Activated T-helper 2 cell treated with anti-CD3 and anti-CD28 coated beads, Interferon-gamma antibody, Interleukin-2, Interleukin-4, amounts not matched to agents 10 μg/mL and 5 μg/mL and 100 μg/mL, durations not matched to agents 14 hours and 24 hours and 36 hours (primary cell): ENCODE measurements at regions of chr3 and their contacts with region 1.

Region 1: DNA sequence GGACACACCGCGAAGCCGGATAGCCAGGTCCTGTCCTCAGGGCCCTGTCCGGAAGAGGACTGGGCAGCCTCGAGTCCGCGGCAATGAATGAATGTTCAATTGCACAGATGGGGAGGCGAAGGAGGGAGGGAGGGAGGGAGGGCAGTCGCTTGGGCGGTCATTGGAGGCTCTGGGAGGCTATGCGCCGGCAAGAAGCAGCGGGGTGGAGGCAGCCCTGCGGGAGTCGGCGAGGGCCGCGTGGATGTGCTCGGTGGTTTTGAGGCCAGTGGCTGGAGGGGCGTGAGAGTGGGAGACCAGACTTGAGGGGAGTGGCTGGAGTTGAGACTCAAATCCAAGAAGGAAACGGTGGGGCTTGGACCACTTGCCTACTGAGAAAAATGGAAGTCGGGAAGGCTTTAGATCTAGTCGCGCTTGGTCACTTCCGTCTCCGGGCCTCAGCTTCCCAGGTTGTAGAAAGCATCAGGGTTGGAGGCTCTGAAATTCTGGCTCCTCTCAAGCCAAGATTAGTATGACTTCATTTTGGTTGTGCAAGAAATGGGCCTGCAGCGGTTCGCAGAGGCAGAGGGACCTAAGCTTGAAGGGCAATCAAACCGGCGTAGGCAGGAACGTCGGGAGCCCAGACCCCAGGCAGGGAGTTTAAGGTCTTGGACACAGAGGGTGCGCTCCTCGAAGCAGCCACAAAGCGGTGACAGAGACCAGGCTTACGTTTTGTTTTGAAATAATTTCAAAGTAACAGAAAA is 21.1 kb upstream of the PLXND1 start:
- DNase-seq: peak; percentile 44
- H3K4me3 Mint-ChIP-seq: peak overlapping the region; percentile 86
- H3K27ac Mint-ChIP-seq: peak overlapping the region; percentile 79
- H3K4me1 Mint-ChIP-seq: peaks cover 18% of the 10 kb centered on the region
- H3K27me3 Mint-ChIP-seq: peaks cover 5% of the 10 kb centered on the region

Region 2: DNA sequence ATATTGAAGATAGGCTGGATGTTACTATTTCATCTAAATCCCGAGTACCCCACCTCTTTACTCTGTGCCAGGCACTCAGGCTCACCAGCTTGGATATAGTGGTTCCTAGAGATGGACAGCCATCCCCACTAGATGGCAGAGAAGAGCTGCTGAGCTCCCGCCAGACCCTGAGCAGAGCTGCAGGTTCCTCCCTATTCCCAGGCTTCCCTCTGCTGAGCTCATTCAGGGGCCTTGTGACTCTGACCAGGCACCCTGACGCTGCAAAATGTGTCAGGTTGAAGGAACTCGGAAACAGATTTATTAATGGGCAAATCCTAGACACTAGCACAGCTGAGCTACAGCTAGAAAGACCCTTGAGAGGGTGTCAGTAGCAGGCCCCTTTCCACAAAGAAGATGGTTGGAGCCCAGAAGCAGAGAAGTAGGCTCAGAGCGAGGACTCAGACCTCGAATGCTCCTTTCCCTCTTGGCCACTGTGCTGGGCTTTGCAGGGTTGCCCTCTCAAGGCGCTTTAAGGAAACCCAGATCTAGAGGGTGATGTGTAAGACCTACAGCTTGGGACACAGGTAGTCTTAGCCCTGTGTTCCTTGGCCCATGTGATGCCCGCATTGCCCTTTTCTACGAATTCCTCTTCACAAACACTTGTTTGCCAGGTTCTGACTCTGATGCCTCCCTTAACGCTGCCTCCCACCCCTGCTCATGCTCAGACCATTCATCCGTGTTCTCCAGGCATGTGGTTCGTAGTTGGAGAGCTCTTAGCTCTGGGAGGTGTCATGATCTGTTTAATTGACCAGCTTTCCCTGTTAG is 137.2 kb before region 1 on chr3:
- intact Hi-C with region 1: loop called (anchors 1 kb)
- DNase-seq: peak; percentile 20
- H3K4me3 Mint-ChIP-seq: no peak overlapping the region
- H3K27ac Mint-ChIP-seq: no peak overlapping the region
- H3K4me1 Mint-ChIP-seq: no peaks in the 10 kb centered on the region
- H3K27me3 Mint-ChIP-seq: no peaks in the 10 kb centered on the region

Region 3: GRCh38 chr3:129507181-129507831 is 120.3 kb before region 1 on chr3:
- intact Hi-C with region 1: no loop called
- DNase-seq: no peak
- H3K4me3 Mint-ChIP-seq: no peak overlapping the region
- H3K27ac Mint-ChIP-seq: no peak overlapping the region
- H3K4me1 Mint-ChIP-seq: no peaks in the 10 kb centered on the region
- H3K27me3 Mint-ChIP-seq: no peaks in the 10 kb centered on the region

Region 4: GRCh38 chr3:129756871-129757270 is 129.3 kb after region 1 on chr3:
- intact Hi-C with region 1: no loop called
- DNase-seq: no peak
- H3K4me3 Mint-ChIP-seq: no peak overlapping the region
- H3K27ac Mint-ChIP-seq: no peak overlapping the region
- H3K4me1 Mint-ChIP-seq: no peaks in the 10 kb centered on the region
- H3K27me3 Mint-ChIP-seq: no peaks in the 10 kb centered on the region

Region 5: DNA sequence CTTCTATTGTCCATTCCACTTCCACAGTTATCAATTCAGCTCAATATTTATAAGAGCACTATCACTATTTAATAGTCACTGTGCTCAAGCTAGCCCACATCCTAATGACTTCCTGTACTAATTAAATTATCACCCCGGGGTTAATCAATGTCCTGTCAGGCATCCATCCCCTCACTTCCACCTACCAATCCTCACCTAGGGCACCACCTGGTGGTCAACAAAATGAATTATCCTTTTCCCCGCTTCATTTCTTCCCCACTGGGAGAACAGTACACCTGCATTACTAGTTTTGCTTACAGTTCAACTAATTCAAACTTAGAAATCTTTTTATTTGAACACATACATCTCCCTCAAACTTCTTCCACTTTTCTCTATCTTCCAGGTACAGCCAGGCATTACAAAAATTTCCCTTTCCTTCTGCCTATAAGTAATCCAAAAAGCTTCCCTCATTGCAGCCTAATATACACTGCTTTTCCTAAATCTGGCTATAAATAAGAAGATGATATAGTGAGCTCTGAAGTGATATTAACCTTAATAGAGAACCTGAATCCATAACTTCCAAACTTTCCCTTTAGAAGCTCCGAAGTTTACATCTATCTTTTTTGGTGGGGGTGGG is 197.4 kb after region 1 on chr3:
- intact Hi-C with region 1: loop called (anchors 2 kb)
- DNase-seq: no peak
- H3K4me3 Mint-ChIP-seq: no peak overlapping the region
- H3K27ac Mint-ChIP-seq: no peak overlapping the region
- H3K4me1 Mint-ChIP-seq: peaks cover 17% of the 10 kb centered on the region
- H3K27me3 Mint-ChIP-seq: no peaks in the 10 kb centered on the region

Region 6: DNA sequence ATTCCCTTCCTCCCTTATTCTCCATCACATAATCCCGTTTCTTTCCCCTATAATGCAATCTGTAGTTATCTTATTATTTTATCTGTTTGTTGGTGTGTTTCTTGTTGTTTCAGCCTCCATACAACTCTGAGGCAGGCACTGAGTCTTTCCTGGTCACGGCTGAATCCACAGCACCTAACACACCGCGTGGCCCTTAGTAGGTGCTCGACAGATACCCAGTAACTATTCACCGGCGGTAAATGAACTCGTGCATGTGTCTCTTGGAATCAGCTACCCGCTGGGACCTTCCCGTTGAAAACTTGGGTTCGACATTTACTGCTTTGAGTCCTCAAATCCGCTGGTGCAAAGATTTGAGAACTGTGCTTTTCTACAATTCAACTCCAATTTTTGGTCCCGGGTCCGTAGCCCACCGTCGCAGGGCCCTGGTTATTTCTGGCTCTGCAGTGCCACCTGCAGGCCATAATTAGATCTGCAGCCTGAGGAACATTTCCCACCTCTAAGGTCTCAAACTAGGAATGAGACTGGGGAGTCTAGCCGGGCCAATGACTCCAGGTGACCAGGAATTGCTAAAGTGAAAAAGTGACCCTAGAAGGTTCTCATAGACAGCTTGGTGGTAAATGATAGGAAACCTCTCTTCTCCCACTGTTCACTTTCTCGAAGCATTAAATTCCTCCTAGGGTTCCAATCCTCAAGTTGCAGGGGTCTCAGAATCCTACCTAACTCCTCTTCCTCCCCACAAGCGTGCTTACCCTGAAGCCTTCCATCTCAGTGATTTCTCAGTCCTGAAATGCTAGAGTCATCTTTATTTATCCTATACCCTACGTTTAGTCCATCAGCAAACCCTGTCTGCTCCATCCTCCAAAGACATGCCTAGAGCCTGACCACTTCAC is 306.9 kb after region 1 on chr3:
- intact Hi-C with region 1: loop called (anchors 5 kb)
- DNase-seq: no peak
- H3K4me3 Mint-ChIP-seq: no peak overlapping the region
- H3K27ac Mint-ChIP-seq: no peak overlapping the region
- H3K4me1 Mint-ChIP-seq: peaks cover 7% of the 10 kb centered on the region
- H3K27me3 Mint-ChIP-seq: peaks cover 3% of the 10 kb centered on the region

Region 7: DNA sequence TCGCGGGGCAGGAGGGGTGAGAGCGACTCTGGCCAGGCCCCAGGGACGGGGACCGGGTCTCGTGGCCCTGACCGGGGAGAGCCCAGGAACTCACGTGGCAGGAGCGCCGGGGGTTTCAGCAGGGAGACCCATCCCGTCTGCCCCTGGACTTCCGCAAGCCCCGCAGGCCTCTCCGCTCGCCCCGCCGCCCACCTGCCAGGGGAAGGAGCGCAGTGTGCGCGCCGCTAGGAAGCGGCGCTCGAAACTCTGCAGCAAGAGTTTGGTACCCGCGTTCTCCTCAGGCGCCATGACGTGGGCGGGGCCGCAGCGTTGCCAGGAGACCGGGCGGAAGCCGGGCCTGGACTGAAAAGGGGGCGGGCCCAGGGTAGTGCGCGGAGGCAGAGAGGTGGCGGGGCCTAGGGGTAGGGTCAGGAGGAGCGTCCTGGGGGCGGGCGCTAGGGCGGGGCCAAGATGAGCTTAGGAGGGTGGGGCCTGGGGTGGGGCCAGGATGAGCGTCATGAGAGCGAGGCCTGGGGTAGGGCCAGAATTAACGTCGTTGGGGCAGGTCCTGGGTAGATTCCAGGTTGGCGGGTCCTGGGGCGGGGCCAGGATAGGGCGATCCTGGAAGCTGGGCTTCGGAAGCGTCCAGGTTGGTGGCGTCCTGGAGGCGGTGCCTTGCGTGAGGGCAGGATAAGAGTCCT is 483.7 kb after region 1 on chr3:
- intact Hi-C with region 1: loop called (anchors 5 kb)
- DNase-seq: peak; percentile 97
- H3K4me3 Mint-ChIP-seq: peak overlapping the region; percentile 92
- H3K27ac Mint-ChIP-seq: peak overlapping the region; percentile 98
- H3K4me1 Mint-ChIP-seq: peaks cover 13% of the 10 kb centered on the region
- H3K27me3 Mint-ChIP-seq: peaks cover 10% of the 10 kb centered on the region